IMR-90 (cell line): ENCODE measurements at regions of chr2 and their contacts with region 1.

Region 1: GRCh38 chr2:202172439-202173211 is 65.8 kb downstream of the SUMO1 start:
- DNase-seq: peak; percentile 59
- ATAC-seq: peak; percentile 59
- H3K4me3 ChIP-seq: no peak overlapping the region
- H3K27ac ChIP-seq: no peak overlapping the region
- H3K4me1 ChIP-seq: peaks cover 13% of the 10 kb centered on the region
- H3K27me3 ChIP-seq: no peaks in the 10 kb centered on the region
- CTCF ChIP-seq: no peak
- POLR2A ChIP-seq: no peak
- RAD21 ChIP-seq: no peak

Region 2: GRCh38 chr2:201854221-201854801 is 318.3 kb before region 1 on chr2:
- CTCF ChIA-PET with region 1: no interaction called
- POLR2A ChIA-PET with region 1: interaction called, 11 read pairs
- dilution Hi-C with region 1: no loop called
- in situ Hi-C with region 1: no loop called
- intact Hi-C with region 1: no loop called
- DNase-seq: peak; percentile 99
- ATAC-seq: peak; percentile 88
- H3K4me3 ChIP-seq: peak overlapping the region; percentile 38; the same call in 1 of the 2 replicates
- H3K27ac ChIP-seq: peak overlapping the region; percentile 77
- H3K4me1 ChIP-seq: peaks cover 38% of the 10 kb centered on the region
- H3K27me3 ChIP-seq: no peaks in the 10 kb centered on the region
- CTCF ChIP-seq: no peak
- POLR2A ChIP-seq: no peak
- RAD21 ChIP-seq: 0 out of 2 replicates have a peak, but pooled peaks have one; percentile 10